ENCODE measurements at regions of chr3 and their contacts with region 1.

Region 1: DNA sequence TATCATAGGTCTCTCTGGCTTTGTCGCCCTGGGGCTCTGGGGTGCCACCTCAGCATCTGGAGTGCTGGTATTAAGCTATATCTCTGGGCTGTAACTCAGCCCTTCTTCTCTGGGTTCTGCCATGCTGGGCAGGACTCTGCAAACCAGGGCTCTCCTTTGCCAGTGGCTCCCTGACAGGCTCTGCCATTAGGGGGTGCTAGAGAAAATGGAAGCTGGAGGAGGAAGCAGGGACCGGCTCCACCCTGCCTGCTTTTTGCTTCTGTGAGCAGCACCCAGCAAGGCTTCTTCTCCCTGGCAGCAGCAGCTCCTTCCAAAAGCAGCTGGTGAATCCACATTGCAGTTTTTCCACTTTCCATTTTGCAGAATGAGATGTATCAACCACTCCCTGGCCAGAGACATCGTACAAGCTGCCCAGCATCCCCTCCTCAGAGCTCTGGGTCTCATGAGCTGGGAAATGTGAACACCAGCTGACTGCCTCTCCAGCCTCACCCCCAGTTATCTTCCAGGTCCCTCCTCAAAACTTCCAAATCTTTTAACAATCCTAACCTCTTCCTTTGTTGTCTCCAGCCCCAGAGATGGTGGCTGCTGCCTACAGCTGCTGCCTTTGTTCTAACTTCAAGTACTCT is 165.0 kb downstream of the ABHD5 start:
- DNase-seq: peak; percentile 82
- H3K4me3 Mint-ChIP-seq: no peak overlapping the region
- H3K27ac Mint-ChIP-seq: no peak overlapping the region
- H3K4me1 Mint-ChIP-seq: peaks cover 22% of the 10 kb centered on the region
- H3K27me3 Mint-ChIP-seq: peaks cover 58% of the 10 kb centered on the region
- CTCF ChIP-seq: peak; percentile 53

Region 2: GRCh38 chr3:43870120-43870519 is 14.3 kb after region 1 on chr3:
- CTCF ChIA-PET with region 1: interaction called, 12 read pairs
- intact Hi-C with region 1: no loop called
- DNase-seq: peak; percentile 38
- H3K4me3 Mint-ChIP-seq: no peak overlapping the region
- H3K27ac Mint-ChIP-seq: no peak overlapping the region
- H3K4me1 Mint-ChIP-seq: peaks cover 59% of the 10 kb centered on the region
- H3K27me3 Mint-ChIP-seq: no peaks in the 10 kb centered on the region
- CTCF ChIP-seq: no peak

Region 3: DNA sequence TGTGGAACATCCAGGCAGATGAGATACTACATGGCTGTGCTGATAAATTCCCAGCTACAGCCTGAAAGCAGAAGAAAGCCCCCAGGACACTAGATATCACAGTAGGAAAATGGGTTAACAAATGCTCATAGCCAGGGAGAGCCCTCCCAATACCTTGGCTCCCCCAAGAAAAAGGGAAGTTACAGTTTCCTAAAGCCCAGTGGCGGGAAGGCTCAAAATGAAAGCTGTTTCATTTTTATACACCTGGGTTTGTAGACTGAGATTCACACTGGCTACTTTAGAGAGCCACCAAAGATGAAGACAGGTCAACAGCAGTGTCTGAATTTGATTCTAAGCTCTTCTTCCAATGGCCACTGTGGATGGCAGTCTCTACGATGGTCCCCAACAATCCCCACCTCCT is 330.9 kb after region 1 on chr3:
- CTCF ChIA-PET with region 1: no interaction called
- intact Hi-C with region 1: no loop called
- DNase-seq: no peak
- H3K4me3 Mint-ChIP-seq: no peak overlapping the region
- H3K27ac Mint-ChIP-seq: no peak overlapping the region
- H3K4me1 Mint-ChIP-seq: no peaks in the 10 kb centered on the region
- H3K27me3 Mint-ChIP-seq: peaks cover 39% of the 10 kb centered on the region
- CTCF ChIP-seq: no peak

Measured in Calu3 (cell line).